Activated CD4-positive, alpha-beta T cell treated with anti-CD3 and anti-CD28 coated beads for 36 hours (primary cell): ENCODE measurements at regions of chr11 and their contacts with region 1.

Region 1: GRCh38 chr11:59142530-59143507 is at the start of gene FAM111A:
- DNase-seq: peak; percentile 90
- ATAC-seq: peak; percentile 77
- H3K4me3 Mint-ChIP-seq: peak within 1 kb of the TSS; percentile 91
- H3K27ac Mint-ChIP-seq: peak within 1 kb of the TSS; percentile 93
- H3K4me1 Mint-ChIP-seq: peaks cover 47% of the 10 kb centered on the region
- H3K27me3 Mint-ChIP-seq: no peaks in the 10 kb centered on the region
- total RNA-seq, gene FAM111A: 87.9 to 135 TPM

Region 2: DNA sequence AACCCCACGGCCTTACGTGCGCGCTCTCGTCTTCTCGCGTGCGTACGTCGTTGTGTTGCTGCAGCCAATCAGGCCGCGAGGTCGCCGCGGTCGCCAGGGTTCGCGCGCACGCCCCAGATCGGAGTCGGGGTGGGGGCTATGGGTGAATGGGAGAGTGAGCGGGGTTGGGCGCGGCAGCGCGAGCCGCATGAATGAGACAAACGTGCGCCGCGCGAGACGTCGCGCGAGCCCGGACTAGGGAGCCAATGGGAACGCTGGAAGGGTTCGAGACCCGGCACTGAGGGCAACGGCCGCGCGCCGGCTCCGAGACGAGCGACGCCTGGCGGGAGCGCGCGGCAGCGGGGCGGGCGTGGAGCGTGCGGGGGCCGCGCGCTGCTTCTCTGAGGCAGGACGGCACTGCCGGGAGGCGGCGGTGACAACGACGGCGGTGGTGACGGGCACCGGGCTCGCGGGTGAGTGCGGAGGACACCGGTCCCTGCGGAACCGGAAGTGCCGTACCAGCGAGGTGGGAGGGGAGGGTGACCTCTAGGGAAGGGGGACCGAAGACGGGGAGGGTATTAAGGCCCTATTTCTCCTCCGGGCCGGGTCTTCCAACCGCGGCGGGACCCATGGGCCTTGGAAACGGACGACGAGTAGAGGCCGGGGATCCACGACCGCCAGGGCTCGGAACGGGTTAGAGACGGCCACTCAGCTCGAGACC is 1474.9 kb before region 1 on chr11 and contains the start of gene ZDHHC5:
- CTCF ChIA-PET with region 1: no interaction called
- POLR2A ChIA-PET with region 1: no interaction called
- intact Hi-C with region 1: loop called in 1 of 2 experiments (anchors 5 kb)
- DNase-seq: peak; percentile 100
- ATAC-seq: peak; percentile 88
- H3K4me3 Mint-ChIP-seq: peak within 1 kb of the TSS; percentile 99
- H3K27ac Mint-ChIP-seq: peak within 1 kb of the TSS; percentile 99
- H3K4me1 Mint-ChIP-seq: peaks cover 37% of the 10 kb centered on the region
- H3K27me3 Mint-ChIP-seq: no peaks in the 10 kb centered on the region
- total RNA-seq, gene ZDHHC5: 46.2 to 60.0 TPM

Region 3: DNA sequence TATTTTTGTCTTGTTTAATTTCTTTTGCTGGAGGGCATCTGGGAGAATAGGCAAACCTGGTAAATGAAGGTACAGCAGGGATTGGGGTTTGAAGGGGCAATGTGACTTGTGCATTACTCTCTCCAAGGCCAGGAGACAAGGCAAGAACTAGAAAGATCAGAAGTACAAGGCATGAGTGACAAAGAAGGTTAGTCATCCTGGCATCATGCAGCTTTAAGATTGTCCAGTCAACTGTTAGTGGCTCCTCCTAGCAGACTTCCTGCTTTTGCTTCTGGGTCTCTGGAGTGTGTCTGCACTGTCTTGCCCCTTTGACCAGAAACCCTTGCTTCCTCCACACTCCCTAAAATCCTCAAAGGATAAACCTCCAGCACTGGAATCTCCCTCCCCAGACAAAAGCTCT is 230.7 kb before region 1 on chr11:
- CTCF ChIA-PET with region 1: no interaction called
- POLR2A ChIA-PET with region 1: no interaction called
- intact Hi-C with region 1: no loop called
- DNase-seq: no peak
- ATAC-seq: no peak
- H3K4me3 Mint-ChIP-seq: no peak overlapping the region
- H3K27ac Mint-ChIP-seq: no peak overlapping the region
- H3K4me1 Mint-ChIP-seq: no peaks in the 10 kb centered on the region
- H3K27me3 Mint-ChIP-seq: peaks cover 27% of the 10 kb centered on the region

Region 4: DNA sequence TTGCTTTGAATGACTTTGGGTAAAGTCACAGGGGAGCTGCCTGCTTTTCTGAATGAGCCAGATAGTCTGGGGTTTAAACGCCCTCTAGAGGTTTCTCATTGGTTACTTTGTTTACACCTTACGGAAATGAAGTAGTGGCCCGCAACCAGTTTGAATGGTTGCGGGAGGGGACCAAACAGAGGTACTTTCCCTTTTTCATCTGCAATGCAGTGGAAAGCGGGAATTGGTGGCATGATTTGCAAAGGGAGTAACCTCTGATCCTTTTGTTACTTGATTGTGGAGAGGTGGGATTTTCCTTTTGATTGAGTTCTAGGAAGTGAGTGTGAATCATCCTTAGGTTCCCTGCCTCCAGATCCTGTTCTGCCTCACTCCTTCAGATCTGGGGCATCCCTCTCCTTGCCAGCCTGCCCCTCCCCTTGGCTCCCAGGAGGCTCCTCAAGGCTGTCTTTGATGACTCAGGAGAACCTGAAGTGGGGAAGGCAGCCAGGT is 219.5 kb before region 1 on chr11:
- CTCF ChIA-PET with region 1: no interaction called
- POLR2A ChIA-PET with region 1: no interaction called
- intact Hi-C with region 1: loop called in 1 of 2 experiments (anchors 2 kb)
- DNase-seq: peak; percentile 50
- ATAC-seq: peak; percentile 87
- H3K4me3 Mint-ChIP-seq: no peak overlapping the region
- H3K27ac Mint-ChIP-seq: no peak overlapping the region
- H3K4me1 Mint-ChIP-seq: peaks cover 24% of the 10 kb centered on the region
- H3K27me3 Mint-ChIP-seq: peaks cover 3% of the 10 kb centered on the region

Region 5: DNA sequence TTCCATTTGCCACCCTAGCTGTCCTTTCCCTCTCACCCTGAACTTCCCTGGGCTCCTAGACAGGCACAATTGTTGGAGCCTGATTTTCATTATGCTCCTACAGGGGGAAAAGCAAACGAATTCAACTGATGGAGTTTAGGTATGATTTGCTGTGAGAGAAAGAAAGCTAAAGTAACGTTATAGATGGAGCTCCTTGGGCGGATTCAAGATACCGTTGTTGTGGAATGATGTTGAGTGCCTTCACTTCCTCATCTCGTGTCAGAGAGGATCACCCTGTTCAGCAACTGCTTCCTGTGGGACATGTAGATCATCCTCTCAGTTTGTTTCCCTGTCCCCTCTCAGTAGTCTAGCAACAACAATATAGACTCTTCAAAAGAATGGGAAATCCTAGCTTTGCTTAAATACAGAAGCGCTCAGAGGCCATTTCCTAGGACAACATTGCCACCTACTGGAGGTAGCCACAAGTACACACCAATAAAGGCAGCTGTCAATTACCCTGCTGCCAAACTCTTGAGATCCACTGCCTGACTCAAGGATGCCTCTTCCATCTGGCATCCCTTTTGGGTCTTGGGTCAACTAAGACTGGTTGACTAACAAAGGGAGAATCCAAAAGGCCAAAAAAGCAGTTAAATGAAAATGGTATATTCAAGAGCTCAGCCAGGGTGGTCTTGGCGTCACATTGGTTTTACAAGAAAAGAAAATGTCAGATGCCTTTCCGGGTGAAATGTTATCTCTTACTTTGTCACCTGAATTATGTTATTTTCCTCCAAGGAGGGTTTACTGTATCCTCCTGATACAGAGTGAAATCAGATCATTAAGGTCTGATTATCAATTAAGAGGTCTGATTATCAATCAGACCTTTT is 15.6 kb after region 1 on chr11:
- CTCF ChIA-PET with region 1: interaction called, 130 read pairs
- POLR2A ChIA-PET with region 1: interaction called, 8 read pairs
- intact Hi-C with region 1: loop called (anchors 2 kb)
- DNase-seq: peak; percentile 74
- ATAC-seq: peak; percentile 98
- H3K4me3 Mint-ChIP-seq: no peak overlapping the region
- H3K27ac Mint-ChIP-seq: no peak overlapping the region
- H3K4me1 Mint-ChIP-seq: peaks cover 6% of the 10 kb centered on the region
- H3K27me3 Mint-ChIP-seq: peaks cover 6% of the 10 kb centered on the region

Region 6: DNA sequence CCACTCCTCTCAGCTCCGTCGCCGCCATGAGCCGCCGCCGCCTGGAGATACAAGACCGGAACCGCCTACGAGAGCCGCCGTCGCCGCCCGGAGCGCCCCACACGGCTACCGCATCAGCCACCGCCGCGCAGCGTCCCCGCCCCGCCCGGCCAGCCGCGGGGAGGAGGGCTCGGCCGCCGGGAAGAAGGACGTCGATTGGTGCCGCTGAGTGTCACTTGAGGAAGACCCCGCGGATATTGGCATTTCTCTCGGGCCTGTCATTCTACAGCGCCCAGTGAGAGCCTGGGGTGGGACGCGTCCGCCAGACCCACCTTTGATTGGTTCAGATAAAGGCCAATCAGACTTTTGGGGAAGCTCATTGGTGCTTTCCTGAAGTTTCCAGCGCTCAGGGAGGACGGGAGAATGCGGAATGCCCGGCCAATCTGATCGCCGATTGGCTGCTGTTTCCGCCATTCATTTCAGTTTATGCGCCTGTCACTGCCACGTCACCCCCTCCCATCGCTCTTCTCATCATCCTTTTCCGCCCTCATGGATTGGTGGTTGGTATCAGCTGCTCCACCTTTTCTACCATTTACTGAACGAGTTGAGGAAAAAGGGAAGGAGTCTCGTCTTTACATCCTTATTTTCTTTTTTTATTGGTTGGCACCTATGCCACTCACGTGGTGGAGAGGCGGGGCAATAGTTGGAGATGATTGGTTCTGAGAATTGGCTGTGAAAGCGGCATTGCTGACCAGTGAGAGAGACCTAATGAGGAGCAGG is 473.0 kb after region 1 on chr11 and contains the start of gene OSBP:
- CTCF ChIA-PET with region 1: no interaction called
- POLR2A ChIA-PET with region 1: no interaction called
- intact Hi-C with region 1: loop called in 1 of 2 experiments (anchors 5 kb)
- DNase-seq: peak; percentile 98
- ATAC-seq: peak; percentile 88
- H3K4me3 Mint-ChIP-seq: peak within 1 kb of the TSS; percentile 99
- H3K27ac Mint-ChIP-seq: peak within 1 kb of the TSS; percentile 96
- H3K4me1 Mint-ChIP-seq: peaks cover 40% of the 10 kb centered on the region
- H3K27me3 Mint-ChIP-seq: no peaks in the 10 kb centered on the region
- total RNA-seq, gene OSBP: 37.9 to 44.2 TPM